Psoas muscle (tissue), 8 donors: ENCODE measurements at regions of chr14 and their contacts with region 1.

Region 1: GRCh38 chr14:103104654-103105452 is 10.3 kb downstream of the EXOC3L4 start:
- DNase-seq: peak; percentile 68 to 86
- ATAC-seq: peak; percentile 67 to 87 (median 74)
- H3K4me3 ChIP-seq: no peak overlapping the region
- H3K27ac ChIP-seq: no peak overlapping the region
- H3K4me1 ChIP-seq: peaks cover 22% of the 10 kb centered on the region
- H3K27me3 ChIP-seq: peaks cover 0 to 50% (median 16%) of the 10 kb centered on the region in 3 donors
- CTCF ChIP-seq: peak; percentile 92

Region 2: DNA sequence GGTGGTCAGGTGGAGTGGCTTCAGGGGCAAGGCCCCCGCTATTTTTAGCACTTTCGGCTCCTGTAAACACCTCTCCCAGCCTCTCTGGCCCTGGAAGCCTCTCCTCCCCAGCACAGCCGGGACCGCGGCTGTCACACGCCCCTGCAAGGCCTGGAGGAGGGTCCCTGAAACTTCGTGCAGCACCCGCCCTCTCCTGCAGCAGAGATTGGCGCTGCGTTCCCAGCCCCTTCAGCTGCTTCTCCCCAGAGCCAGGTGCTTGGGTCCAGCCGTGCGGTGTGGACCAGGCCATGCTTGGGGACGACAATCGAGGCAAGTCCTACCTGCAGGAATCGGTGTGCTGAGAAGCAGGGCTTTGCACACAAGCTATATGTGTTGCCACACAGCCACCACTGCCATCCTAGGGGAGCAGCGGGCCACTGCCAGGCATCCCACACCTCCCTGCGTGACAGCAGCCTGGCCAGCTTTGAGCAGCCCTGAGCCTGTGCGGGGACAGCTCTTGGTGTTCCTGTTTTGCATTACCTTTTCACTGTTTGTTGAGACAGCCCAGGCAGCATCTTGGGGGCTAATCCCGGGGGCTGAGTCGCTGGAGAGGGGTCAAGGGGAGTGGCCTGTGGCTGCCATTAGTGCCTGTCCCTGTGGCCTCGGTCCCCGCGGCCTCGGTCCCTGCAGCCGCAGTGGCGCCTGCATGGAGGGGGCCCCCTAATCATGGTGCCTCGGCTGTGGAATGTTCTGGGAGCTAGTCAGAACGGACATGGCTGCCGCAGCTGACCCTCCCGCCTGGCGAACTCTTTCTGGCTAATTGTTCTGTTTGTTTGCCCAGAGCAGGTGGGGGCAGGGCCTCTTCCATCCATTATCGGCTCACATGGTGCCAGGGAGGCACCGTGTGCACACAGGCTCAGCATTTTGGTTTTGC is 355.2 kb before region 1 on chr14:
- intact Hi-C with region 1: no loop called
- DNase-seq: no peak
- ATAC-seq: no peak
- H3K4me3 ChIP-seq: no peak overlapping the region
- H3K27ac ChIP-seq: no peak overlapping the region
- H3K4me1 ChIP-seq: no peaks in the 10 kb centered on the region
- H3K27me3 ChIP-seq: no peaks in the 10 kb centered on the region
- CTCF ChIP-seq: no peak

Region 3: DNA sequence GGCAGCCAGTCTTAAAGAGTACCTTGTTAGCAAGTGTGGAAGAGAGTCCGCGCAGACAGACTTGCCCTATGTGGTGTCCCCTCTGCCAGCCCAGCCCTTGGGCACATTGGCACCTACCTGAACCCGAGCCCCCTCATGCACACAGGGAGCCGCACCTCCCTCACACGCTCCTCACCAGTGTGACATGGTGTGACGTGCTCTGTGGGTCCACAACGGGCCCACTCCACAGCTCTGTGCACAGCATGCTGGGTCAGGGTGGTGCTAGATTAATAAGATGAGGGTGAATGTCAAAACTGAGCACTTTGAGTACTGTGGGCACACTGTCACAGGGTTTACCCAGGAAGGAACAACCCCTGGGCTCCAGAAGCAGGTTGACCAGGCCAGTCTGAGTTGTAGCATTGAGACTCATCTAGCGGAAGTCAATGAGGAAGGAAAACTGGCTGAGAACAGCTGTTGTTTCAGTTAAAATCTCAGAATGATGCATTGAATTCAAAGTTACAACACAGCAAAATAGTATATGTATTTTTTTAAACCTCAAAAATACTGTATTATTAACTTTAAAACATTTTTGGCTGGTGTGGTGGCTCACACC is 235.8 kb before region 1 on chr14:
- intact Hi-C with region 1: no loop called
- DNase-seq: no peak
- ATAC-seq: no peak
- H3K4me3 ChIP-seq: no peak overlapping the region
- H3K27ac ChIP-seq: no peak overlapping the region
- H3K4me1 ChIP-seq: no peaks in the 10 kb centered on the region
- H3K27me3 ChIP-seq: no peaks in the 10 kb centered on the region
- CTCF ChIP-seq: no peak

Region 4: DNA sequence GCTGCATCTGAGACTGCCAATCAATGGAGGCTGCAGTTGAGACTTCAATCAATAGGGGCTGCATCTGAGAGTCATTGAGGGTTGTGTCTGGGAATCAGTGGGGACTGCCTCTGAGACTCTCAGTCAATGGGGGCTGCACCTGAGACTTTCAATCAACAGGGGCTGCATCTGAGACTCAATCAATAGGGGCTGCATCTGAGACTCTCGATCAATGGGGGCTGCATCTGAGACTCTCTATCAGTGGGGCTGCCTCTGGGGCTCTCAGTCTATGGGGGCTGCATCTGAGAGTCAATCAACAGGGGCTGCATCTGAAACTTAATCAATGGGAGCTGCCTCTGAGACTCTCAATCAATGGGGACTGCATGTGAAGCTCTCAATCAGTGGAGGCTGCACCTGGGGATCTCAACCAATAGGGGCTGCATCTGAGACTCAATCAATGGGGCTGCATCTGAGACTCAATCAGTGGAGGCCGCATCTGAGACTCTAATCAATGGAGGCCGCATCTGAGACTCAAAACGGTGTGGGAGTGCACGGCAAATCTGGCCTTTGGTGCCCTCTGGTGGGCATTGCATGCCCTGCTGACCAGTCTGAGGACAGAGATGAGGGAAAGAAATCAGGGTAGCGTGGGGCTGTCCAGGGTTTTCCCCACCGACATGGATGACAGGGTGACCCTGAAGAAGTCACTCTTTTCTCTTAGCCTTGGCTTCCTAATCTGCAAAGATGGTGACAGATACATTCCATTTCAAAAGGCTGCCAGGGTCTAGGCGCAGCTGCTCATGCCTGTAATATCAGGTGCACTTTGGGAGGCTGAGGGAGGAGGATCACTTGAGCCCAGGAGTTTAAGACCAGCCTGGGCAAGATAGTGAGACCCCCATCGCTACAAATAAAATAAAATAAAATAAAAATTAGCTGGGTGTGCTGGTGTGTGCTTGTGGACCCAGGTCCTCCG is 187.8 kb after region 1 on chr14:
- intact Hi-C with region 1: loop called (anchors 2 kb)
- DNase-seq: peak; percentile 74 to 88
- ATAC-seq: peak; percentile 92 to 97 (median 95)
- H3K4me3 ChIP-seq: no peak overlapping the region
- H3K27ac ChIP-seq: no peak overlapping the region
- H3K4me1 ChIP-seq: no peaks in the 10 kb centered on the region
- H3K27me3 ChIP-seq: no peaks in the 10 kb centered on the region
- CTCF ChIP-seq: peak; percentile 90